PC-9 (cell line): ENCODE measurements at regions of chr15 and their contacts with region 1.

Region 1: GRCh38 chr15:74240002-74240568 is 4.0 kb downstream of the CCDC33 start:
- DNase-seq: peak; percentile 96 to 97
- H3K4me3 ChIP-seq: no peak overlapping the region
- H3K27ac ChIP-seq: peak overlapping the region; percentile 63; the same call in 1 of the 2 replicates
- H3K4me1 ChIP-seq: peaks cover 67% of the 10 kb centered on the region
- H3K27me3 ChIP-seq: no peaks in the 10 kb centered on the region
- CTCF ChIP-seq: peak; percentile 68

Region 2: GRCh38 chr15:74011610-74012009 is 228.5 kb before region 1 on chr15:
- CTCF ChIA-PET with region 1: no interaction called
- POLR2A ChIA-PET with region 1: no interaction called
- intact Hi-C with region 1: no loop called
- DNase-seq: no peak
- H3K4me3 ChIP-seq: no peak overlapping the region
- H3K27ac ChIP-seq: no peak overlapping the region
- H3K4me1 ChIP-seq: peaks cover 8% of the 10 kb centered on the region; the same call in 1 of the 2 replicates
- H3K27me3 ChIP-seq: no peaks in the 10 kb centered on the region
- CTCF ChIP-seq: no peak

Region 3: DNA sequence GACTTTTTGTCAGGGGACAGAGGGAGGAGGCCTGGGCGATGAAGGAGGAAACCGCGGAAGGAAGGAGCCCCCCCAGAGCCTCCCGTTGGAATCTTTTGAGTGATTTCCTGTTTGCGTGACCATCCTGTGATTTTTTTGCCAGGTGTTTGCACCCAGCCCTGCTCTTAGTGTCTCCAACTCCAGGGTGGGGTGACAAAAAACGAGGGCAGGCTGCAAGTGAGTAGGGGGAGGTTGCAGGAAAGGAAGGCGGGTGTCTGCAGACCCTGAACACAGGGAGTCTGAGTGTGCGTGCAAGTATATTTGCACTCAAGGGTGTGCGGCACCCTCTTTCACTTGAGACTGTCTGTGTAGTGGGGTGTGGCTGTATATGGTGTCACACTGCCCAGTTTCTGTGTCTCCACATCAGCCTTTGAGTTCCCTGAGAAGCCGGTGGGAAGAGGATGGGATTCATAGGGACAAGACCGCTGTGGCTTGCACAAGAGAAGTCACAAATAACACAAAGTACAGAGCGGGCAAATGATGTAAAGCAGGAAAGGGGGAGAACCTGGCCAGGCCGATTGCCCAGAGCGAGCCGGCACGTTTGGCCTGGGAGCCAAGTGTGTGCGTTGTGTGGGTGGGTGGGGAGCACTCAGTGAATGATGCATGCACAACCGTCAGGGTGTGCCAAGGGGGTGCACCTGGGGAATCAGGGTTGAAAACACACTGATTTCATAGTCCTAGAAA is 103.1 kb before region 1 on chr15:
- CTCF ChIA-PET with region 1: no interaction called
- POLR2A ChIA-PET with region 1: interaction called, 14 read pairs
- intact Hi-C with region 1: loop called (anchors 1 kb)
- DNase-seq: no peak
- H3K4me3 ChIP-seq: peak overlapping the region; percentile 70
- H3K27ac ChIP-seq: peak overlapping the region; percentile 74
- H3K4me1 ChIP-seq: peaks cover 20% of the 10 kb centered on the region
- H3K27me3 ChIP-seq: no peaks in the 10 kb centered on the region
- CTCF ChIP-seq: no peak

Region 4: GRCh38 chr15:74172701-74173379 is 67.2 kb before region 1 on chr15:
- CTCF ChIA-PET with region 1: no interaction called
- POLR2A ChIA-PET with region 1: interaction called, 13 read pairs
- intact Hi-C with region 1: no loop called
- DNase-seq: no peak
- H3K4me3 ChIP-seq: no peak overlapping the region
- H3K27ac ChIP-seq: no peak overlapping the region
- H3K4me1 ChIP-seq: peaks cover 15% of the 10 kb centered on the region
- H3K27me3 ChIP-seq: no peaks in the 10 kb centered on the region
- CTCF ChIP-seq: no peak

Region 5: DNA sequence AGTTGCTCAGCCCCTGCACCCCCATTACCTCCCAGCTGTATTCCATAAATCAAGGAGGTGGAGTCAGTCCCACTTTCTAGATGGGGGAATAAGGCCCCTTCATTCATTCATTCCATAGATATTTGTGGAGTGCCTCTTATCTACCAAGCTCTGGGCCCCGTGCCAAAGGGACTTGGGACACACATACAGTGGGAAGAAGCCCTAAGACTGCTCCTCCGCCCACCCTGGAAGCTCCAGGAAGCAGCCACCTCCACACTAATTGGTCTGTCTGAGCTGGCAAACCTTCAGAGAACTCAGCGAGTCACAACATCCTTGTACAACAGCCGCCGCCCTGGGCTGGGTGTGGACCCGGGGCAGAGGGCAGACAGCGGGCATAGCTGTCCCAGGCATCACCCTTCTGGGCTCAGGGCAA is 43.9 kb before region 1 on chr15:
- CTCF ChIA-PET with region 1: interaction called, 3 read pairs
- POLR2A ChIA-PET with region 1: interaction called, 6 read pairs
- intact Hi-C with region 1: loop called (anchors 1 kb)
- DNase-seq: peak; percentile 96 to 98
- H3K4me3 ChIP-seq: no peak overlapping the region; the same call in 1 of the 2 replicates
- H3K27ac ChIP-seq: peak overlapping the region; percentile 95
- H3K4me1 ChIP-seq: peaks cover 93% of the 10 kb centered on the region
- H3K27me3 ChIP-seq: no peaks in the 10 kb centered on the region
- CTCF ChIP-seq: no peak

Region 6: GRCh38 chr15:74213858-74214284 is 26.2 kb before region 1 on chr15:
- CTCF ChIA-PET with region 1: interaction called, 9 read pairs
- POLR2A ChIA-PET with region 1: interaction called, 13 read pairs
- intact Hi-C with region 1: loop called (anchors 2 kb)
- DNase-seq: no peak
- H3K4me3 ChIP-seq: no peak overlapping the region
- H3K27ac ChIP-seq: peak overlapping the region; percentile 88
- H3K4me1 ChIP-seq: peaks cover 69% of the 10 kb centered on the region
- H3K27me3 ChIP-seq: no peaks in the 10 kb centered on the region
- CTCF ChIP-seq: no peak

Region 7: GRCh38 chr15:74302821-74303359 is 62.8 kb after region 1 on chr15:
- CTCF ChIA-PET with region 1: interaction called, 10 read pairs
- POLR2A ChIA-PET with region 1: interaction called, 3 read pairs
- intact Hi-C with region 1: loop called (anchors 5 kb)
- DNase-seq: peak in 1 of 2 experiments; percentile 62
- H3K4me3 ChIP-seq: no peak overlapping the region
- H3K27ac ChIP-seq: no peak overlapping the region
- H3K4me1 ChIP-seq: peaks cover 6% of the 10 kb centered on the region; the same call in 1 of the 2 replicates
- H3K27me3 ChIP-seq: 0 out of 2 replicates have a peak, but pooled peaks cover 4% of the 10 kb centered on the region
- CTCF ChIP-seq: peak; percentile 84

Region 8: DNA sequence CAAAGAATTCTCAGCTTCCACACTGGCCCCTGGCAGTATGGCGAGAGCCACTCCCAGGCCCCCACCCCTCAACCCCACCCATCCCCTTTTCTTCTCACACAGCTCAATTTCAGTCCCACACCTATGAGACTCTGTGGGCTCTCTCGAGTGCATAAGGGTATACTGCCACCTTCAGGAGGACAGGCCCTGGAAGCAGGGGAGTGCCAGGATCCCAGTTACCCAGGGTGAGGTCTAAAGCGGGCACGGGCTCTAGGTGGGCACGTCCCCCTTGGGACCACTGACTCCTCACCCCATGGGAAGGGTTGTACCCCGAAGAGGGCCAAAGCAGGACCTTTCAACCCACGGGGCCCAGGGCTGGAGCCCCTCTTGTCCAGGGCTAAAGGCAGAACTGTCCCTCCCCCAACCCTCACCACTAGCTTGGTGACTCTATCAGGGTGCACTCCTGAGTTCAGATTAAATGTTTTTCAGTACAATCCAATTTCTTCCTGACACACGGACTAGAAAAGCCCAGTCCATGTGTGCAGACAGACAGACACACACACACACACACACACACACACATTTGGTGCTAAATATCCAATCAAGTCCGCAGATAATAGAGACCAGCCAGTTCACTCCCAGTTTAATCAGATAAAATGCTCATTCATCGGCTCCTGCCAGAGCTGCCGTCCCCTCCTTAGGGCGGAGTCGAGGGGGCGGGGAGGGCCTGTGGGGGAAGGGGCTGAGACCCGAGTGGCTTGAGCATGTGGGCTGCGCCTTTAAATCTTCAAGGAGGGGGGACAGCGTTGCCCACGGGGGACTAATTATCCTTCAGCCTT is 68.0 kb after region 1 on chr15:
- CTCF ChIA-PET with region 1: interaction called, 10 read pairs
- POLR2A ChIA-PET with region 1: interaction called, 3 read pairs
- intact Hi-C with region 1: loop called (anchors 5 kb)
- DNase-seq: peak; percentile 59 to 68
- H3K4me3 ChIP-seq: no peak overlapping the region
- H3K27ac ChIP-seq: no peak overlapping the region
- H3K4me1 ChIP-seq: peaks cover 6% of the 10 kb centered on the region; the same call in 1 of the 2 replicates
- H3K27me3 ChIP-seq: no peaks in the 10 kb centered on the region
- CTCF ChIP-seq: peak; percentile 84